MCF 10A (cell line): ENCODE measurements at regions of chr15 and their contacts with region 1.

Region 1: DNA sequence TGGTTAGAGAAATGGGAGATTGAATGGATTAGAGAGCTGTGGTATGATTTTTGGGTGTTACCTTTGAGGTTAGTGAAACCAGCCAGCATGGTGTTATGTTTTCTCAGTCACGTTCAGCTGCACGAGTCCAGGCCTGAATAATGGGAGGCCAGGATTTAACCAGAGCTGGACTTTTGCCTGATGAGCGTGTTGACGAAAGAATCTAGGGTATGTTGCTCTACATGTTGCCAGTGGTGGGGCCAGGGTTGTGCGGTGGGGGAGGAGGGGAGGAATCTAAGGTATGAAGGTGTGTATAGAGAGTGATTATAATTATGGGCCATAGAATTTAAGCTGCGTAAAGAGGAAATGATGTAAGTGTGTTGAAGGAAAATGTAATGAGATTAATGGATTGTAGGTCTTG is 22.8 kb downstream of the MINDY2 start:
- DNase-seq: peak; percentile 87
- H3K4me3 Mint-ChIP-seq: peak overlapping the region; percentile 46
- H3K27ac Mint-ChIP-seq: peak overlapping the region; percentile 98
- H3K4me1 Mint-ChIP-seq: peaks cover 29% of the 10 kb centered on the region
- H3K27me3 Mint-ChIP-seq: no peaks in the 10 kb centered on the region
- CTCF ChIP-seq: no peak

Region 2: DNA sequence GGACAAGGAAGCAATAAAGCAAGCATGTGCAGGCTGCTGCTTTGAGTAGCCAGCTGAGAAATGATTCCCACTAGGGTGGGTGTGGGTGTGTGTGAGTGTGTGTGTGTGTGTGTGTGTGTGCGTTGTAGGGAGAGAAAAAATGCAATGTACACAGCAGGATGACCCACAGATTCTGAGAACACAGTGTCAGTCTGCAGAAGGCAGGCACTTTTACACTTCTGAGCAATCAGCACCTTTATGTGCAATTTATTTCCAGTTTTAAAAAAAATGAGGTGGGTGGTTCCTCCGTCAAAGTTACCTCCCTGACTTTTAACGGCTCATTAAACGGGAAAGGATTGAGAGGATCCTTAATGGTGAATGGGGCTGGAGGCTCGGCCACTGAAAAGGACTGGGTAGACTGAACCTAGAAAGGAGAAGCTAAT is 400.6 kb before region 1 on chr15:
- CTCF ChIA-PET with region 1: no interaction called
- POLR2A ChIA-PET with region 1: no interaction called
- intact Hi-C with region 1: no loop called
- DNase-seq: no peak
- H3K4me3 Mint-ChIP-seq: no peak overlapping the region
- H3K27ac Mint-ChIP-seq: no peak overlapping the region
- H3K4me1 Mint-ChIP-seq: peaks cover 24% of the 10 kb centered on the region
- H3K27me3 Mint-ChIP-seq: no peaks in the 10 kb centered on the region
- CTCF ChIP-seq: no peak

Region 3: GRCh38 chr15:58805095-58805494 is 11.2 kb after region 1 on chr15:
- CTCF ChIA-PET with region 1: interaction called, 4 read pairs
- POLR2A ChIA-PET with region 1: interaction called, 10 read pairs
- intact Hi-C with region 1: no loop called
- DNase-seq: peak; percentile 4
- H3K4me3 Mint-ChIP-seq: no peak overlapping the region
- H3K27ac Mint-ChIP-seq: peak overlapping the region; percentile 32
- H3K4me1 Mint-ChIP-seq: peaks cover 8% of the 10 kb centered on the region
- H3K27me3 Mint-ChIP-seq: no peaks in the 10 kb centered on the region
- CTCF ChIP-seq: no peak